Activated CD4-positive, alpha-beta T cell treated with anti-CD3 and anti-CD28 coated beads for 36 hours (primary cell): ENCODE measurements at regions of chr21 and their contacts with region 1.

Region 1: GRCh38 chr21:17660449-17660848 is 47.7 kb upstream of the BTG3 start:
- DNase-seq: no peak
- ATAC-seq: no peak
- H3K4me3 Mint-ChIP-seq: no peak overlapping the region
- H3K27ac Mint-ChIP-seq: no peak overlapping the region
- H3K4me1 Mint-ChIP-seq: no peaks in the 10 kb centered on the region
- H3K27me3 Mint-ChIP-seq: peaks cover 6% of the 10 kb centered on the region

Region 2: GRCh38 chr21:17631195-17631594 is 29.3 kb before region 1 on chr21:
- CTCF ChIA-PET with region 1: no interaction called
- POLR2A ChIA-PET with region 1: no interaction called
- intact Hi-C with region 1: loop called in 1 of 2 experiments (anchors 2 kb)
- DNase-seq: no peak
- ATAC-seq: no peak
- H3K4me3 Mint-ChIP-seq: no peak overlapping the region
- H3K27ac Mint-ChIP-seq: no peak overlapping the region
- H3K4me1 Mint-ChIP-seq: no peaks in the 10 kb centered on the region
- H3K27me3 Mint-ChIP-seq: peaks cover 3% of the 10 kb centered on the region

Region 3: DNA sequence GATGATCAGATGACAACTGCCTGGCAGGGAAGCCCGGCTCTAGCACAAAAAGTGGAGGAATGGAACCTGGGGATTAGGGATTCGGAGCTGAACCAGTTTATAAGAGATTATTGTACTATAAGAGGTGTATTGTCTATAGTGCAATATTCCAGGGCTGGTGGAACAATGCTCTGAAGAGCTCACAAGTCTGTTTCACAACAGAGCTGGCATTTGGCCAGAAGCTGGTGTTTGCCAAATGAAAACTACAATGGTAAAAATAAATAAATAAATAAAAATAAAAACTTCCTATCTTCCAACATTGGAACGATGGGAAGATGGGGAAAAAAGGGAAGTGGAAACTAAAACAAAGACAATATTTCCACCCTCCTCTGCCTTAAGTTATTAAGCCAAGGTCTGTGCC is 657.7 kb after region 1 on chr21:
- CTCF ChIA-PET with region 1: no interaction called
- POLR2A ChIA-PET with region 1: no interaction called
- intact Hi-C with region 1: no loop called
- DNase-seq: no peak
- ATAC-seq: no peak
- H3K4me3 Mint-ChIP-seq: no peak overlapping the region
- H3K27ac Mint-ChIP-seq: no peak overlapping the region
- H3K4me1 Mint-ChIP-seq: no peaks in the 10 kb centered on the region
- H3K27me3 Mint-ChIP-seq: no peaks in the 10 kb centered on the region